OCI-LY7 (cell line): ENCODE measurements at regions of chr2 and their contacts with region 1.

Region 1: DNA sequence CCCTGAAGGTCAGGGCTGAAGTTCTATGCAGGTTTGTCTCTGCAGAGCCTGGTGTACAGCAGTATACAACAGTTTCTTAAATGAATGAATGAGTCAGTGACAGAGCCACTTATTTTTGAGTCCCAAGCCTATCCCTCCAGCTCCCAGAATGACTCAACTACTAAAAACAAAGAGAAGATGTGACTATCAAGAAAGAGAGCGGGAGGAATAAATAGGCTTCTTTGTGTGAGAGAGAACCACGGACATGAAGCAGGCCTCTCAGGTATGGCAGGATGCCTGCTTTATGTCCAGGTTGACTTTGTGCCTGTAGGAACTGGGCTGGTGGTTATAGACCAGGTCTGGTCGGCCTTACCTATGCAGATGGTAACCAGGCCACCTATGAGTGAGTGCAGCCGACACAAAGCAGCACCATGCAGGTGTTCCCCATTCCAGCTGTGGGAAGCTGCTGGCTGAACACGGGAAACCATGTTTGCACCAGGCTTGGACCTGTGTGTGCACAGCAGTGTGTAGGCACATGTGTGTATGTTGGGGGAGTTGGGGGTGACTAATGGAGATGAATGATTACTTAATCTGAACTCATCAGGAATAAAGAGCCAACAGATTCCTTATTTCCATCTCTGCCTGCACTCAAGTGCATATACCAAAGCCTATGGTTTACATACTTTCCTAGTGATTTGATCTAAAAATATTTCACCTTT is 171.0 kb downstream of the OSR1 start:
- DNase-seq: no peak
- H3K4me3 ChIP-seq: no peak overlapping the region
- H3K27ac ChIP-seq: no peak overlapping the region
- H3K4me1 ChIP-seq: no peaks in the 10 kb centered on the region
- CTCF ChIP-seq: no peak

Region 2: GRCh38 chr2:18871430-18871829 is 316.0 kb before region 1 on chr2:
- CTCF ChIA-PET with region 1: no interaction called
- POLR2A ChIA-PET with region 1: no interaction called
- intact Hi-C with region 1: loop called (anchors 2 kb)
- DNase-seq: no peak
- H3K4me3 ChIP-seq: no peak overlapping the region
- H3K27ac ChIP-seq: no peak overlapping the region
- H3K4me1 ChIP-seq: no peaks in the 10 kb centered on the region
- CTCF ChIP-seq: no peak

Region 3: GRCh38 chr2:19158208-19158607 is 29.3 kb before region 1 on chr2:
- CTCF ChIA-PET with region 1: no interaction called
- POLR2A ChIA-PET with region 1: no interaction called
- intact Hi-C with region 1: no loop called
- DNase-seq: no peak
- H3K4me3 ChIP-seq: no peak overlapping the region
- H3K27ac ChIP-seq: no peak overlapping the region
- H3K4me1 ChIP-seq: no peaks in the 10 kb centered on the region
- CTCF ChIP-seq: no peak

Region 4: DNA sequence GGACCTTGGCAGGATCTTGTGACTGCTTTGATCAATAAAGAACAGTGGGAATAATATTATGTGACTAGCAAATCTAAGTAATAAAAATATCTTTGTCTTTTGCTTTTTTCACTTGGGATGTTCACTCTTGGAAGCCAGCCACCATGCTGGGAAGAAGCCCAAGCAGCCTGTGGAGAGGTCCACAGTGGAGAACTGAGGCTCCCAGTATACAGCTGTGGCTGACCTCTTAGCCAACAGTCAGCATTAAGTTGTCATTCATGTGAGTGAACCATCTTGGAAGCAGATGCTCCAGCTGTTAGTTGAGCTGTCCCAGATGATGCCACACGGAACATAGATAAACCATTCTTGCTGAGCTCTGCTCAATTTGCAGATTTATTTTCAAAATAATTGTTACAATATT is 10.9 kb after region 1 on chr2:
- CTCF ChIA-PET with region 1: no interaction called
- POLR2A ChIA-PET with region 1: no interaction called
- intact Hi-C with region 1: no loop called
- DNase-seq: no peak
- H3K4me3 ChIP-seq: no peak overlapping the region
- H3K27ac ChIP-seq: no peak overlapping the region
- H3K4me1 ChIP-seq: no peaks in the 10 kb centered on the region
- CTCF ChIP-seq: no peak